B cell (primary cell): ENCODE measurements at regions of chr10 and their contacts with region 1.

Region 1: GRCh38 chr10:62632071-62632809 is 172.3 kb upstream of the ADO start:
- DNase-seq: peak; percentile 84
- ATAC-seq: peak; percentile 81
- H3K4me3 ChIP-seq: peak overlapping the region in 4 of 5 experiments; percentile 31 to 56 (median 40)
- H3K4me3 Mint-ChIP-seq: peak overlapping the region; percentile 90
- H3K27ac ChIP-seq: peak overlapping the region; percentile 94 to 95
- H3K27ac Mint-ChIP-seq: peak overlapping the region; percentile 99
- H3K4me1 ChIP-seq: peaks cover 54 to 59% of the 10 kb centered on the region in 2 donors
- H3K4me1 Mint-ChIP-seq: peaks cover 54% of the 10 kb centered on the region
- H3K27me3 ChIP-seq: no peaks in the 10 kb centered on the region
- H3K27me3 Mint-ChIP-seq: no peaks in the 10 kb centered on the region
- CTCF ChIP-seq: no peak

Region 2: DNA sequence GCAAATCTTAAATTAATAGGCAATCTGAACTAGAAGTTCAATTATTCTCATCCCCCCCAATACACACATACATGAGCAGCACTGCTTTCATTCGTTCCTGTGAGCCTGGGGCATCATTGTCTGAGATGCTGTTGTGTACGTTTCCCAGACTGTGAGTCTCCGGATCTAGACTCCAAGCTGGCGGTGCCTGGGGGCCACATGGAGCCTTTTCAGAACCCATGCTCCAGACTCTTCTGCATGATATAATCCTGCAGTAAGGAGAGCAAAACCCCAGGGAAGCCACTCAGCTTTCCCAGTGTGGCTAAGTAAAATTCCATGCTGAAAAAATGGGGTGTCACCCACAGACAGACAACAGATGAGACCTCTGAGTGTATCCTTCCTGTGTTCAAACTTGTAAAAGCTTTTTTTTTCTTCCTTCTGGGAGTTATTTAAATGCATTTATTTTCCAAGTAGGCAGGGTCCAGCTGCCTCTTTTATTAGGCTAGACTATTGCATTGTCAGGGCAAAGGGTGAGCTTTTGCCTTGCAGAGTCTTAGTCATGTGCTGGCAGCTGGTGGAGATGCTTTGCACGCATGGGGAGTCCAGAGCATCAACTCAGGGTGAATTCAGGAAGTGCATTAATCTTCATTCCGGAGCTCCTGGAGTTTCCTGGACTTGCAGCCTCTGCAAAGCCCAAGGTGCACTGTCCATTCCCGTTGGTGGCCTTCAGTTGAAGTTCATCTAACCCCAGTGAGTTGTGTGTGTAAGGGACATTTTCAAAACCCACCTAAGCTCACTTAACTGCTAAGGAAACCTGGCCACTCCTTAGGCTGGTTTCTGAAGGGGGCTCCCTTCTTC is 13.4 kb before region 1 on chr10:
- CTCF ChIA-PET with region 1: interaction called, 8 read pairs
- POLR2A ChIA-PET with region 1: no interaction called
- intact Hi-C with region 1: loop called (anchors 2 kb)
- DNase-seq: peak; percentile 39
- ATAC-seq: peak; percentile 58
- H3K4me3 ChIP-seq: no peak overlapping the region
- H3K4me3 Mint-ChIP-seq: no peak overlapping the region
- H3K27ac ChIP-seq: no peak overlapping the region
- H3K27ac Mint-ChIP-seq: no peak overlapping the region
- H3K4me1 ChIP-seq: peaks cover 15 to 20% of the 10 kb centered on the region in 2 donors
- H3K4me1 Mint-ChIP-seq: peaks cover 33% of the 10 kb centered on the region
- H3K27me3 ChIP-seq: no peaks in the 10 kb centered on the region
- H3K27me3 Mint-ChIP-seq: no peaks in the 10 kb centered on the region
- CTCF ChIP-seq: no peak

Region 3: DNA sequence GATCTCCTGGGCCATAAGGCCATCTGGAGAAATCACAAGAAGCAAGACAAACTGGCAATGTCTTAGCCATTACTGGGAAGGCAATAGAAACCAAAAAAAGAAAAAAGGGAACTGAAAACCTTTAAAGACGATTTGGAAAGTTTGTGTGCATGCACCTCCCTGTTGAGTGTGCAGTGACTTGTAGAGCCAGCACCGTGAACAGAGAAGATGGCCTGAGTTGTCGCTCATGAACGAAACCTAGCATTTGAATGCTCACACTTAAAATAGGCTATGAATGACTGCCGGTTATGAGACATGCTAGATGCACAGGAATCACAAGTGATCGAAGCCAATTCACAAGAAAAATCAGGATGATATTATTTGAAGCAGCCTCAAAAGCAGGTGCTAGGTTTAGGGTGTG is 21.0 kb after region 1 on chr10:
- CTCF ChIA-PET with region 1: interaction called, 7 read pairs
- POLR2A ChIA-PET with region 1: interaction called, 4 read pairs
- intact Hi-C with region 1: loop called (anchors 1 kb)
- DNase-seq: peak; percentile 84
- ATAC-seq: peak; percentile 91
- H3K4me3 ChIP-seq: no peak overlapping the region
- H3K4me3 Mint-ChIP-seq: peak overlapping the region; percentile 12
- H3K27ac ChIP-seq: no peak overlapping the region
- H3K27ac Mint-ChIP-seq: peak overlapping the region; percentile 53
- H3K4me1 ChIP-seq: peaks cover 51 to 57% of the 10 kb centered on the region in 2 donors
- H3K4me1 Mint-ChIP-seq: peaks cover 56% of the 10 kb centered on the region
- H3K27me3 ChIP-seq: peaks cover 0 to 31% (median 2%) of the 10 kb centered on the region in 4 experiments
- H3K27me3 Mint-ChIP-seq: peaks cover 6% of the 10 kb centered on the region
- CTCF ChIP-seq: no peak

Region 4: GRCh38 chr10:62681211-62681940 is 49.1 kb after region 1 on chr10:
- CTCF ChIA-PET with region 1: interaction called, 3 read pairs
- POLR2A ChIA-PET with region 1: no interaction called
- intact Hi-C with region 1: loop called (anchors 2 kb)
- DNase-seq: peak; percentile 82
- ATAC-seq: peak; percentile 97
- H3K4me3 ChIP-seq: no peak overlapping the region
- H3K4me3 Mint-ChIP-seq: peak overlapping the region; percentile 21
- H3K27ac ChIP-seq: no peak overlapping the region
- H3K27ac Mint-ChIP-seq: peak overlapping the region; percentile 51
- H3K4me1 ChIP-seq: peaks cover 14 to 17% of the 10 kb centered on the region in 2 donors
- H3K4me1 Mint-ChIP-seq: peaks cover 16% of the 10 kb centered on the region
- H3K27me3 ChIP-seq: no peaks in the 10 kb centered on the region
- H3K27me3 Mint-ChIP-seq: peaks cover 4% of the 10 kb centered on the region
- CTCF ChIP-seq: peak; percentile 53

Region 5: DNA sequence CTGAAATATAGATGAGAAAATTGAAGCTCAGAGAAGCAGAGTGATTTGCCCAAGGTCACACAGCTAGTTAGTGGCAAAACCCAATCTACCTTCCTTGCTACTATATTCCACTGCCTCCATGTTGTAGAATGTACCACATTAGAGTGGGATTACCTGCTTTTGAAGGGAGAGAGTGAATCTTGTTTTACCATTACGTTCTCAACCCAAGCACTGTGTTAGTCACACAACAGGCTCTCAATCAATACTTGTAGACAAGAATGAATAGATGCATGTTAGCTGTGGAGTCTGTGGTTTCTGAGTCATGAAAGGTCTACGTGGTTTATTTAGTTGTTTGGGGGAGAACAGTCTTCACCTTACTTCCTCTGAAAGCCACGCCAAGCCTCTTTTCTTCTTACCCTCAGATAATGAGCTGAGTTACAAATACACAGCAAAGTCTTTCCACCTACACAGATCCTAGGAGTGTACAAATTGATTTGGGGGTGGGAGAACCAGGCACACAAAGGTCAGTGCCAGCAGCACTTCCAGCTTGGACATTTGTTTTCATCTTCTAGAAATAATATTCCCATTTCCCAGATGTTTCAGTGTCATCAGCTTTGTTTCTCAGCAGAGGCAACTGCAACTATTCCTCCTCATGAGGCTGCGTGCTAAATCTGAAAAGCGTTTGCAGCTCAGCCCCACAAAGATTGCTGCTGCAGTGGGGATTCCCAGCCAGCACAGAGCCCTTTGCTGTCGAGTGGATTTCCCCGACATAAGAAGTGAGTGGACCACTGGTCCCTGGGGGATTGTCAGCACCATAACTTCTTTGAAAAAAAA is 100.8 kb after region 1 on chr10:
- CTCF ChIA-PET with region 1: interaction called, 3 read pairs
- POLR2A ChIA-PET with region 1: no interaction called
- intact Hi-C with region 1: loop called (anchors 5 kb)
- DNase-seq: peak; percentile 80
- ATAC-seq: peak; percentile 75
- H3K4me3 ChIP-seq: no peak overlapping the region
- H3K4me3 Mint-ChIP-seq: no peak overlapping the region
- H3K27ac ChIP-seq: peak overlapping the region in 1 of 2 donors; percentile 79
- H3K27ac Mint-ChIP-seq: peak overlapping the region; percentile 93
- H3K4me1 ChIP-seq: peaks cover 38 to 42% of the 10 kb centered on the region in 2 donors
- H3K4me1 Mint-ChIP-seq: peaks cover 4% of the 10 kb centered on the region
- H3K27me3 ChIP-seq: no peaks in the 10 kb centered on the region
- H3K27me3 Mint-ChIP-seq: no peaks in the 10 kb centered on the region
- CTCF ChIP-seq: no peak

Region 6: DNA sequence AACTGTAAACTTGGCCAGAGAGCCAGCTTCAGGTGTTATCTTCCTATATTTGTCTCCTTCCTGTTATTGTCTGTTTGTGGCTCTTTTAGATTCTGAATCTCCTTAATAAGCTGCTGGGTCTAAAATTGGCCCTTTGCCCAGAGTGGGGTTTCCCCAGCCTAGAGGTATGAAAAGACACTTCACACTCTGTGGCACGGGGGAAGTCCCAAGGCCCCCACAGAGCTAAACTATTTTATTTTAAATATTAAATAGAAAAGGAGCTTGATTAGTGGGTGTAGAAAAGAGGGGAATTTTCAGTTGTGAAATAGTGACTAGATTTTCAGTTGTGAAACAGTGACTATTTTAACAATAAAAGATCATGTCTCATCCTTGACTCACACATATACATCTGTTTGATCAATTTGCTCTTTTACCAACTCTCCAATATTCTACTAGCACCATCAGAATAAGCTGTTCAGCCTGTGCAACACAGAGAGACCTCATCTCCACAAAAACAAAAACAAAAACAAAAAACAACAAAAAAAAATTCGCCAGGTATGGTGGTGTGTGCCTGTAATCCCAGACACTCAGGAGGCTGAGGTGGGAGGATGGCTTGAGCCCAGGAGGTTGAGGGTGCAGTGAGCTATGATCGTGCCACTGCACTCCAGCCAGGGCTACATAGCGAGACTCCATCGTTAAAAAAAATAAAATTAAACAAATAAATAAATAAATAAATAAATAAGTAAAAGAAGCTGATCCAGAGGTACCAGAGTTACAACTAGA is 147.4 kb after region 1 on chr10:
- CTCF ChIA-PET with region 1: no interaction called
- POLR2A ChIA-PET with region 1: no interaction called
- intact Hi-C with region 1: loop called (anchors 1 kb)
- DNase-seq: peak; percentile 91
- ATAC-seq: peak; percentile 99
- H3K4me3 ChIP-seq: peak overlapping the region in 1 of 5 experiments; percentile 21
- H3K4me3 Mint-ChIP-seq: peak overlapping the region; percentile 35
- H3K27ac ChIP-seq: peak overlapping the region; percentile 38 to 60
- H3K27ac Mint-ChIP-seq: peak overlapping the region; percentile 47
- H3K4me1 ChIP-seq: peaks cover 25 to 27% of the 10 kb centered on the region in 2 donors
- H3K4me1 Mint-ChIP-seq: peaks cover 33% of the 10 kb centered on the region
- H3K27me3 ChIP-seq: no peaks in the 10 kb centered on the region
- H3K27me3 Mint-ChIP-seq: no peaks in the 10 kb centered on the region
- CTCF ChIP-seq: no peak

Region 7: DNA sequence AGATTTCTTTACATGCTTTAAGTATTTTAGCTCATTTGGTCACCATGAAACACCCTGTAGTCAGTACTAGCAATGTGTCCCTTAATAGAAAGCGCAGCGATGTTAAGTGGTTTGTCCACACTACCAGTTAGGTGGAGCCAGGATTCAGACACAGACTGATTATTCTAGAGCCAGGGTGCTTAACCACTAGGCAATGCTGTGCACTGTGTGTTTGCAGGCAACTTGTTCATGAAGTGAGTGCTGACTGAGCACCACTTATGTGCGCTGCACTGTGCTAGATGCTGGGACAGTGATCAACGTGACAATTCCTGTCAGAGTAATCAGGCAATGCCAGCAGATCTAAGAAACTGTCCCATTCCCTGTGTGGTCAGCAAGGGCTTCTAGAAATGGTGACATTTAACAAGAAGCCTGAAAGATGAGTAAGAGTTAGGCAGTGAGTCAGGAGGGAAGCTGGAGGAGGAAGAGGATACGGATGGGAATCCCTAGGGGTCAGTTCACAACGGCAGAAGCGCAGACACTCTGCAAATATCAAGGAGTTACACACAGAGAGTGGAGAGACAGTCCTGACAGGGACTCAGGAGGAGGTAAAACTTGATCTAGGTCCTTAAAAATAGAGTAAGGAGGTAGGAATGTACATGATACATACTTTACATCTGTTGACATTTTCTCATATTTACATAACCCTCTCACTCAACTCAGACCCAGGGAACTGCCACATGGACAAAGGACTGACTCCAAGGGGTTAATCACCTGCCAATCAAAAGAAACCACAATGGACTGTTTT is 253.6 kb after region 1 on chr10:
- CTCF ChIA-PET with region 1: no interaction called
- POLR2A ChIA-PET with region 1: no interaction called
- intact Hi-C with region 1: no loop called
- DNase-seq: no peak
- ATAC-seq: no peak
- H3K4me3 ChIP-seq: no peak overlapping the region
- H3K4me3 Mint-ChIP-seq: no peak overlapping the region
- H3K27ac ChIP-seq: no peak overlapping the region
- H3K27ac Mint-ChIP-seq: no peak overlapping the region
- H3K4me1 ChIP-seq: no peaks in the 10 kb centered on the region
- H3K4me1 Mint-ChIP-seq: no peaks in the 10 kb centered on the region
- H3K27me3 ChIP-seq: no peaks in the 10 kb centered on the region
- H3K27me3 Mint-ChIP-seq: peaks cover 33% of the 10 kb centered on the region
- CTCF ChIP-seq: no peak

Region 8: GRCh38 chr10:63133056-63133820 is 501.0 kb after region 1 on chr10 and contains the start of gene NRBF2:
- CTCF ChIA-PET with region 1: no interaction called
- POLR2A ChIA-PET with region 1: no interaction called
- intact Hi-C with region 1: loop called (anchors 1 kb)
- DNase-seq: peak; percentile 99
- ATAC-seq: peak; percentile 86
- H3K4me3 ChIP-seq: peak within 1 kb of the TSS; percentile 89 to 100 (median 95)
- H3K4me3 Mint-ChIP-seq: peak within 1 kb of the TSS; percentile 93
- H3K27ac ChIP-seq: peak within 1 kb of the TSS; percentile 99
- H3K27ac Mint-ChIP-seq: peak within 1 kb of the TSS; percentile 97
- H3K4me1 ChIP-seq: peaks cover 26 to 36% of the 10 kb centered on the region in 2 donors
- H3K4me1 Mint-ChIP-seq: peaks cover 43% of the 10 kb centered on the region
- H3K27me3 ChIP-seq: peaks cover 0 to 2% (median 0%) of the 10 kb centered on the region in 4 experiments
- H3K27me3 Mint-ChIP-seq: peaks cover 3% of the 10 kb centered on the region
- CTCF ChIP-seq: peak; percentile 39
- total RNA-seq, gene NRBF2: 20.5 and 24.6 TPM in 2 replicates